ENCODE measurements at regions of chr13 and their contacts with region 1.

Region 1: GRCh38 chr13:60431108-60431700 is 34.2 kb downstream of the TDRD3 start:
- DNase-seq: peak; percentile 61
- ATAC-seq: peak; percentile 68
- H3K4me3 ChIP-seq: no peak overlapping the region
- H3K27ac ChIP-seq: no peak overlapping the region
- H3K4me1 ChIP-seq: peaks cover 12% of the 10 kb centered on the region
- H3K27me3 ChIP-seq: no peaks in the 10 kb centered on the region
- CTCF ChIP-seq: peak; percentile 87 to 93 (median 88); a peak in 5 of 6 replicates
- EP300 ChIP-seq: no peak
- POLR2A ChIP-seq: no peak
- RAD21 ChIP-seq: peak; percentile 98

Region 2: DNA sequence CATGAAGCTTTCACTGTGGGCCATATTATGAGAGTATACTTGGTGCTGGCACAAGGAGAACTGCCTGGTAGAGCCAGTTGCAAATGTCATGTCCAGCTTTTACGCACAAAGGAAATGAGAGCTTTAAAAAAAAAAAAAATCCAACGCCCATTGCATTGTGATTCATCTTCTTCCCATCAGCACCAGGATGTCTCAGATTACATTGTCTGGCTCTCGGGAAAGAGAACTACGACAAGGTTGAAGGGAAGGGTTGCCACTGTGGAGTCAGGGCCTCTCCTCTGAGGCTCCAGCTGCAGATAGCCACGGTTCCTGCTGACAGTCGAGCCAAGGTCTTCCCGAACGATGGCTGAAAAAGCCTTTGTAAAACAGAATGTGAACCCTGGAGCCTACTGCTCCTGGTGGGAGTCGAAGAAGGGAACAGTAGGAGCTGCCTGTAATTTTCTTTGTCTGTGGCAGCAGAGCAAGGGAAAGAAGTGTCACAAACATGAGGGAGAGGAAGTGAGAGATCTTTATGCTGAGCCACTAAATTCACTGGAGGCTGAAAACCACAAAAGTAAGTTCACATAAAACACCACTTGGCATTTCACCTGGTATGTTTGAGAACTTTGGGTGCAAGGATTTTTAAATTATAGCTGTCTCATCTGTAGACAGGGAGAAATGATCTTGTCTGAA is 972.2 kb before region 1 on chr13:
- CTCF ChIA-PET with region 1: no interaction called
- POLR2A ChIA-PET with region 1: no interaction called
- RAD21 ChIA-PET with region 1: no interaction called
- SMC1A ChIA-PET with region 1: no interaction called
- in situ Hi-C with region 1: no loop called
- intact Hi-C with region 1: no loop called
- DNase-seq: no peak
- ATAC-seq: no peak
- H3K4me3 ChIP-seq: no peak overlapping the region
- H3K27ac ChIP-seq: no peak overlapping the region
- H3K4me1 ChIP-seq: no peaks in the 10 kb centered on the region
- H3K27me3 ChIP-seq: no peaks in the 10 kb centered on the region
- CTCF ChIP-seq: no peak
- EP300 ChIP-seq: no peak
- POLR2A ChIP-seq: no peak
- RAD21 ChIP-seq: no peak

Region 3: DNA sequence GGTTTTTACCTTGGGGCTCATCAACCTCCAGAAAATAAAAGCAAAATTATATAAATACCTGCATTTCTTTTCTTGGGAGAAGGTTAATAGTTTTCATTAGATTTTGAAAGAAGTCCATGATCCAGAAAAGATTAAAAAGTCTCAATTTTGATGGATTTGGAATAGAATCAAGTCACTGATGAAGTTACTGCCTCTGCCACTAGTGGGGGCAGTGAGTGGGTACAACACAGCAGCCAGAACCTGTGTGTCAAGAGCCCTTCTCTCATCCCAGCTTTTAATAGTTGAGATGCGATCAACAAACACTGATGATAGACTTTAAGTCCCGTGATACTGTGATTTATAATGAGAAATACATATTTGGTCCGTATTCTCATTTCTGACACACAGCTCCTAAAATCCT is 954.2 kb before region 1 on chr13:
- CTCF ChIA-PET with region 1: interaction called, 4 read pairs
- POLR2A ChIA-PET with region 1: no interaction called
- RAD21 ChIA-PET with region 1: no interaction called
- SMC1A ChIA-PET with region 1: no interaction called
- in situ Hi-C with region 1: no loop called
- intact Hi-C with region 1: loop called (anchors 5 kb)
- DNase-seq: no peak
- ATAC-seq: peak; percentile 54; the same call in 1 of the 3 replicates
- H3K4me3 ChIP-seq: no peak overlapping the region
- H3K27ac ChIP-seq: no peak overlapping the region
- H3K4me1 ChIP-seq: no peaks in the 10 kb centered on the region
- H3K27me3 ChIP-seq: no peaks in the 10 kb centered on the region
- CTCF ChIP-seq: peak in 2 of 3 experiments; percentile 35 to 49; a peak in 3 of 6 replicates
- EP300 ChIP-seq: no peak
- POLR2A ChIP-seq: no peak
- RAD21 ChIP-seq: no peak

Region 4: GRCh38 chr13:59906413-59907049 is 524.7 kb before region 1 on chr13:
- CTCF ChIA-PET with region 1: interaction called, 12 read pairs
- POLR2A ChIA-PET with region 1: no interaction called
- RAD21 ChIA-PET with region 1: interaction called, 16 read pairs
- SMC1A ChIA-PET with region 1: interaction called, 9 read pairs
- in situ Hi-C with region 1: no loop called
- intact Hi-C with region 1: loop called (anchors 5 kb)
- DNase-seq: no peak
- ATAC-seq: peak; percentile 63
- H3K4me3 ChIP-seq: no peak overlapping the region
- H3K27ac ChIP-seq: no peak overlapping the region
- H3K4me1 ChIP-seq: no peaks in the 10 kb centered on the region
- H3K27me3 ChIP-seq: no peaks in the 10 kb centered on the region
- CTCF ChIP-seq: peak; percentile 56 to 62 (median 59)
- EP300 ChIP-seq: no peak
- POLR2A ChIP-seq: no peak
- RAD21 ChIP-seq: peak; percentile 77

Region 5: GRCh38 chr13:60329221-60329983 is 101.8 kb before region 1 on chr13:
- CTCF ChIA-PET with region 1: interaction called, 9 read pairs
- POLR2A ChIA-PET with region 1: no interaction called
- RAD21 ChIA-PET with region 1: interaction called, 22 read pairs
- SMC1A ChIA-PET with region 1: interaction called, 15 read pairs
- in situ Hi-C with region 1: no loop called
- intact Hi-C with region 1: no loop called
- DNase-seq: peak; percentile 7
- ATAC-seq: peak; percentile 89
- H3K4me3 ChIP-seq: no peak overlapping the region
- H3K27ac ChIP-seq: no peak overlapping the region
- H3K4me1 ChIP-seq: no peaks in the 10 kb centered on the region
- H3K27me3 ChIP-seq: no peaks in the 10 kb centered on the region
- CTCF ChIP-seq: peak; percentile 43 to 59 (median 57); a peak in 5 of 6 replicates
- EP300 ChIP-seq: no peak
- POLR2A ChIP-seq: no peak
- RAD21 ChIP-seq: peak; percentile 84

Region 6: GRCh38 chr13:60396783-60397703 is 34.2 kb before region 1 on chr13 and contains the start of gene TDRD3:
- CTCF ChIA-PET with region 1: interaction called, 112 read pairs
- POLR2A ChIA-PET with region 1: interaction called, 11 read pairs
- RAD21 ChIA-PET with region 1: interaction called, 103 read pairs
- SMC1A ChIA-PET with region 1: interaction called, 111 read pairs
- in situ Hi-C with region 1: no loop called
- intact Hi-C with region 1: loop called (anchors 1 kb)
- DNase-seq: peak; percentile 59
- ATAC-seq: peak; percentile 81
- H3K4me3 ChIP-seq: peak within 1 kb of the TSS; percentile 96
- H3K27ac ChIP-seq: peak within 1 kb of the TSS; percentile 96
- H3K4me1 ChIP-seq: peaks cover 18% of the 10 kb centered on the region
- H3K27me3 ChIP-seq: no peaks in the 10 kb centered on the region
- CTCF ChIP-seq: peak; percentile 77 to 94 (median 89)
- EP300 ChIP-seq: 0 out of 4 replicates have a peak, but pooled peaks of 1 of the 2 experiments have one; percentile 12
- POLR2A ChIP-seq: peak; percentile 63
- RAD21 ChIP-seq: peak; percentile 52
- polyA plus RNA-seq, gene TDRD3: 8.4 to 9.5 TPM

Region 7: DNA sequence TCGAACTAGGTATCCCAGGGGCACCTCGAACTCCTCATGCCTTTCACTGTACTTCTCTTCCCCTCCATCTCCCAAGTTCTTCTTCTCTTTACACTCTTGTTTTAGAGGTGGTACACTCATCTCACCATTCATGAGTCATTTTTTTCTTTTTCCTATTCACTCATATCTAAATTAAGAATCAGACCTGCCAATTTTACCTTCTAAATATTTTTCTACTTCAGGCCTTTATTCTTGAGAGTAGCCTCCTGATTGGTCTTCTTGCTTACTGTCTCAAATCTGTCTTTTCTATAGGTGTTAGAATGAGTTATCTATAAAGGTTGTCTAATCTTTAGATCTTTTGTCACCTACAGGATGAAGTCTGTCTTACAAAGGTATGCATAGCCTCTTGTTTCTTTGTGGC is 13.5 kb before region 1 on chr13:
- CTCF ChIA-PET with region 1: interaction called, 4 read pairs
- POLR2A ChIA-PET with region 1: interaction called, 4 read pairs
- RAD21 ChIA-PET with region 1: interaction called, 29 read pairs
- SMC1A ChIA-PET with region 1: interaction called, 55 read pairs
- in situ Hi-C with region 1: no loop called
- intact Hi-C with region 1: no loop called
- DNase-seq: no peak
- ATAC-seq: peak; percentile 63
- H3K4me3 ChIP-seq: no peak overlapping the region
- H3K27ac ChIP-seq: no peak overlapping the region
- H3K4me1 ChIP-seq: no peaks in the 10 kb centered on the region
- H3K27me3 ChIP-seq: no peaks in the 10 kb centered on the region
- CTCF ChIP-seq: no peak
- EP300 ChIP-seq: no peak
- POLR2A ChIP-seq: no peak
- RAD21 ChIP-seq: no peak